Activated CD4-positive, alpha-beta memory T cell treated with anti-CD3 and anti-CD28 coated beads for 36 hours (primary cell): ENCODE measurements at regions of chr12 and their contacts with region 1.

Region 1: DNA sequence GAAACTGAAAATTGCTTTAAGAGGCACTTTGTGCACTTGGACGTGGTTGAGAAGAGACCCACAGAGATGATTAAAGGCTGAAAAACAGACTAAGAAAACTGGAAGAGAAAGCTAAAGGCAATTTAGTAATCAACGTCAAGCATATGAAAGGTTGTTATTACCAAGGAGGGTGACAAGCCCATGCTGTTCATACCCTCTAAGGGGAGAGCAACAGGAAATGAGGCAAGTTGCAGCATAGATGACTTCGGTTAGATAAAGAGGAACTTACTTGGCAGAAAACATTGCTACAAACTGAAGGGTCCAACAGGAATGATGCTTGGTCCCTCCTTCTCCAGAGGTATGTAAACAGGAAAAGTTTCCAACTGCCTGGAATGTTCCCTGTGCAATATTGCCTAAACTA is 107.8 kb downstream of the DUSP6 start:
- DNase-seq: peak; percentile 40
- H3K4me3 Mint-ChIP-seq: peak overlapping the region; percentile 25
- H3K27ac Mint-ChIP-seq: peak overlapping the region; percentile 86
- H3K4me1 Mint-ChIP-seq: peaks cover 39% of the 10 kb centered on the region
- H3K27me3 Mint-ChIP-seq: no peaks in the 10 kb centered on the region

Region 2: GRCh38 chr12:88241862-88242570 is 1002.5 kb before region 1 on chr12:
- CTCF ChIA-PET with region 1: no interaction called
- POLR2A ChIA-PET with region 1: no interaction called
- intact Hi-C with region 1: loop called (anchors 5 kb)
- DNase-seq: peak; percentile 54
- H3K4me3 Mint-ChIP-seq: no peak overlapping the region
- H3K27ac Mint-ChIP-seq: peak overlapping the region; percentile 83
- H3K4me1 Mint-ChIP-seq: peaks cover 35% of the 10 kb centered on the region
- H3K27me3 Mint-ChIP-seq: peaks cover 13% of the 10 kb centered on the region

Region 3: GRCh38 chr12:88993651-88994050 is 250.9 kb before region 1 on chr12:
- CTCF ChIA-PET with region 1: no interaction called
- POLR2A ChIA-PET with region 1: no interaction called
- intact Hi-C with region 1: no loop called
- DNase-seq: no peak
- H3K4me3 Mint-ChIP-seq: no peak overlapping the region
- H3K27ac Mint-ChIP-seq: no peak overlapping the region
- H3K4me1 Mint-ChIP-seq: no peaks in the 10 kb centered on the region
- H3K27me3 Mint-ChIP-seq: peaks cover 6% of the 10 kb centered on the region

Region 4: GRCh38 chr12:89051065-89051677 is 193.4 kb before region 1 on chr12:
- CTCF ChIA-PET with region 1: no interaction called
- POLR2A ChIA-PET with region 1: no interaction called
- intact Hi-C with region 1: loop called (anchors 1 kb)
- DNase-seq: no peak
- H3K4me3 Mint-ChIP-seq: no peak overlapping the region
- H3K27ac Mint-ChIP-seq: no peak overlapping the region
- H3K4me1 Mint-ChIP-seq: peaks cover 13% of the 10 kb centered on the region
- H3K27me3 Mint-ChIP-seq: no peaks in the 10 kb centered on the region

Region 5: GRCh38 chr12:89073027-89073398 is 171.5 kb before region 1 on chr12:
- CTCF ChIA-PET with region 1: interaction called, 4 read pairs
- POLR2A ChIA-PET with region 1: no interaction called
- intact Hi-C with region 1: loop called (anchors 1 kb)
- DNase-seq: peak; percentile 48
- H3K4me3 Mint-ChIP-seq: no peak overlapping the region
- H3K27ac Mint-ChIP-seq: peak overlapping the region; percentile 86
- H3K4me1 Mint-ChIP-seq: peaks cover 41% of the 10 kb centered on the region
- H3K27me3 Mint-ChIP-seq: no peaks in the 10 kb centered on the region

Region 6: DNA sequence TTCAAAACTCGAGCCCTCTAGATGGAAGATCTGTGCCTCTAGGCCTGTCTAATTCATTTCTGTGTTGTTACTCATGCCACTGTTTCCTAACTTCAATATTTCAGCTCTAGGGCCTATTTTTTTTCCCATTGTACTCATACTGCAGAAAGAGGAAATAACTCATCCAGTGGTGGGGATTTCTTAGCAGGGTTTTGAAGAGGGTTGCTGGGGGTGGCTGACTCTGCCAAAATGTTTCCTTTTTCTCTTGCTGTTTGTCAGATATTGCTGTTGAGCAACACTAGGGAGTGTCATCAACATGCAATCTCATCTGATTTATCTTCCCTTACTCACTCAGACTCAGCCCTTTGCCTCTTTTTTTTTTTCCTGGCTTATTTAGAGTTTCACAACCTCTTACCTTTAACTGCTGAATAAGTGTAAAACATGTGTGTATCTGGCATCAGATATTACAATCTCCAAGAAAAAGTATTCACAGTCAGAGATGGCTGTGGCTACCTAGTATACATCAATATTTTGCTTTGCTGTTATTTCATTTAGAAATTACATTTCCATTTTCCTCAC is 81.8 kb before region 1 on chr12:
- CTCF ChIA-PET with region 1: interaction called, 11 read pairs
- POLR2A ChIA-PET with region 1: interaction called, 12 read pairs
- intact Hi-C with region 1: loop called (anchors 1 kb)
- DNase-seq: peak; percentile 90
- H3K4me3 Mint-ChIP-seq: no peak overlapping the region
- H3K27ac Mint-ChIP-seq: no peak overlapping the region
- H3K4me1 Mint-ChIP-seq: peaks cover 13% of the 10 kb centered on the region
- H3K27me3 Mint-ChIP-seq: no peaks in the 10 kb centered on the region

Region 7: GRCh38 chr12:89261982-89262381 is 17.4 kb after region 1 on chr12:
- CTCF ChIA-PET with region 1: interaction called, 4 read pairs
- POLR2A ChIA-PET with region 1: no interaction called
- intact Hi-C with region 1: loop called (anchors 1 kb)
- DNase-seq: no peak
- H3K4me3 Mint-ChIP-seq: no peak overlapping the region
- H3K27ac Mint-ChIP-seq: no peak overlapping the region
- H3K4me1 Mint-ChIP-seq: peaks cover 15% of the 10 kb centered on the region
- H3K27me3 Mint-ChIP-seq: no peaks in the 10 kb centered on the region

Region 8: DNA sequence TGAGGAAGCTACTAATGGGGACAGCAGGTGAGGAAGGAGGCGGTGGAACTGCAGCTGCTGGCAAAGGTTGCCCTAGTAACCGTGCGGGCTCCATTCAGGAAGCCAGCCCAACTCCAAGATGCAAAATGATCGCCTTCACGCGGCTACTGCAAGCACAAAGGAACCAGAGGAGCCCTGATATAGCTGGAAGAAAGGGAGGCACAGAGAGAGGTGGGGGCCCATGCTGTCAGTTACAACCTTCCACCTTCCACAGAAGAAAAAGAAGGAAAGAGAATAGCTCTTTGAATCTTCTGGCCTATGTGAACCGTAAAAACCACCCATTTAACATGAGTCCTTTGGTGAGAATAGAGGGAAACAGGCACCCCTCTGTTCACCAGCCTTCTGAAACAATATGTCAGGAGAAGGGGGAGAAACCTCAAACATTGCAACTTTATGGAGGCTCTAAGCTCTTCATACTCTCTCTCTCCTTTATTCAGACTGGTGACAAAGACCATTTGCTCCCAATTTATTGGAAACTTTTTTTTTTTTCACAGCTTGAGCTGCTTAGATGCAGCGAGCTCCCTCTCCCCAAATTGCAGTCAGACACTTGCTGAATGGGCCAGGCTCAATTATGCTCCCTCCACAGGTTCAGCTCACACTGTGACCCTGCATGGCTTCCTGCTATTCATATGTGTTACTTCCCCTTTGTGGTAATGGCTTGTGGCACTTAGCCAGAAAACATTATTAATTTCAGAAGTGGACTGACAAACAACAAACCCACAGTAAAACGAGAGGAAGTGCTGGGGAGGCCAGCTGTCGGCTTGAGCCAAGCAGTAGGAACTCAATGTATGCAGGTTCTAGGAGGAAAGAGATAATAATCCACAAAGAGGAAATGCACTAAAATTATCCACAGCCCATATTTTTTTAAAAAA is 101.5 kb after region 1 on chr12:
- CTCF ChIA-PET with region 1: interaction called, 15 read pairs
- POLR2A ChIA-PET with region 1: interaction called, 59 read pairs
- intact Hi-C with region 1: loop called (anchors 1 kb)
- DNase-seq: peak; percentile 65
- H3K4me3 Mint-ChIP-seq: peak overlapping the region; percentile 57
- H3K27ac Mint-ChIP-seq: peak overlapping the region; percentile 76
- H3K4me1 Mint-ChIP-seq: peaks cover 56% of the 10 kb centered on the region
- H3K27me3 Mint-ChIP-seq: peaks cover 2% of the 10 kb centered on the region

Region 9: GRCh38 chr12:89481213-89481914 is 236.8 kb after region 1 on chr12:
- CTCF ChIA-PET with region 1: no interaction called
- POLR2A ChIA-PET with region 1: no interaction called
- intact Hi-C with region 1: no loop called
- DNase-seq: no peak
- H3K4me3 Mint-ChIP-seq: no peak overlapping the region
- H3K27ac Mint-ChIP-seq: no peak overlapping the region
- H3K4me1 Mint-ChIP-seq: peaks cover 10% of the 10 kb centered on the region
- H3K27me3 Mint-ChIP-seq: no peaks in the 10 kb centered on the region